Activated CD4-positive, alpha-beta T cell treated with anti-CD3 and anti-CD28 coated beads, Interleukin-2, amount 10 ng/mL, durations not matched to agents 24 days and 14 days (primary cell): ENCODE measurements at regions of chr11 and their contacts with region 1.

Region 1: GRCh38 chr11:789943-790342 is at the start of gene CEND1:
- DNase-seq: peak; percentile 87
- H3K4me3 Mint-ChIP-seq: peak within 1 kb of the TSS; percentile 55
- H3K27ac Mint-ChIP-seq: no peak within 1 kb of the TSS
- H3K4me1 Mint-ChIP-seq: peaks cover 4% of the 10 kb centered on the region
- H3K27me3 Mint-ChIP-seq: no peaks in the 10 kb centered on the region
- total RNA-seq, gene CEND1: 3.8 and 4.2 TPM in 2 replicates

Region 2: DNA sequence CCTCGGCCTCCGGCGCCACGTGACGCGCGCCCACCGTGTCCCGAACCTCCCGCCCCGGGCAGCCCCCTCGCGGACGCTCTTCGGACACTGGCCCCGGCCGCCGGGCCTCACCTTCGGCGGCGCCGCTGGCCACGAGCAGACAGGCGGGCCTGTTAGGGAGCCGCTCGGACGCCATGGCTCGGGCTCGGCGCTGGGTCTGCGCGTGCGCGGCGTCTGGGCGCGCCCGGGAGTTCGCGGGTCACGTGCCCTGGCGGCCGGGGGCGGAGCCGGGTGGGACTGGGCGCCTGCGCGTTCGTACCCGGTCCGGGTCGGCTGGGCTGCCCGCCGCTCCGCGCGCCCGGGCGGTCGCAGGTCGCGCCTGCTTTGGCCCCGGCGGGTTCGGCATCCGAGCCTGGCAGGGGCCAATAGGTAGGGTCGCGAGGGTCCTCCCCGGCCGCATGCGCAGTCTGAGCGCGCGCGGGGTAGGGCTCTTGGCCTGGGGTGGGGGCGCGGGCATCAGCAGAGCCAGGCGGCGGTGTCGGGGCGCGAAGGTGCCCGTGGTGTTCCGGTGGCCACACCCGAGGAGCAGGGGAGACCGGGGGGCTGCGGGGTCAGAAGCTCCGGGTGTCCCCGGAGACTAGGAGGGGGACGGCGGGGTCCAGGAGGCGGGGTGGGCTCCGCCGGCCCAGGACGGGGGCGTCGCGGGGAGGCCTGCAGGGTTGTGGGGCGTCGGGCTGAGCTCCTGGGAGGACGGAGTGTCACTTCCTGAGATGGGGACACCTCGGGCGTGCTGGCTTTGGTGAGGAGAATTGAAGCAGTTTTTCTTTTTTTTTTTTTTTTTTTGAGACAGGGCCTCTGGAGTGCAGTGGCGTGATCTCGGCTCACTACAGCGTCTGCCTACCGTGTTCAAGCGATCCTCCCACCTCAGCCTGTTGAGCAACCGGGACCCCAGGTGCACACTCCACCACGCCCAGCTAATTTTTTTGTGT is 12.4 kb before region 1 on chr11 and contains the start of gene GATD1:
- intact Hi-C with region 1: loop called (anchors 1 kb)
- DNase-seq: peak; percentile 99
- H3K4me3 Mint-ChIP-seq: peak within 1 kb of the TSS; percentile 92
- H3K27ac Mint-ChIP-seq: peak within 1 kb of the TSS; percentile 85
- H3K4me1 Mint-ChIP-seq: peaks cover 18% of the 10 kb centered on the region
- H3K27me3 Mint-ChIP-seq: no peaks in the 10 kb centered on the region
- total RNA-seq, gene GATD1: 81.7 and 82.2 TPM in 2 replicates

Region 3: GRCh38 chr11:1171985-1172728 is 382.2 kb after region 1 on chr11:
- intact Hi-C with region 1: no loop called
- DNase-seq: no peak
- H3K4me3 Mint-ChIP-seq: no peak overlapping the region
- H3K27ac Mint-ChIP-seq: peak overlapping the region; percentile 32
- H3K4me1 Mint-ChIP-seq: no peaks in the 10 kb centered on the region
- H3K27me3 Mint-ChIP-seq: no peaks in the 10 kb centered on the region